Activated B cell treated with CpG ODN at 0.5 μM for 24 hours (primary cell): ENCODE measurements at regions of chr16 and their contacts with region 1.

Region 1: DNA sequence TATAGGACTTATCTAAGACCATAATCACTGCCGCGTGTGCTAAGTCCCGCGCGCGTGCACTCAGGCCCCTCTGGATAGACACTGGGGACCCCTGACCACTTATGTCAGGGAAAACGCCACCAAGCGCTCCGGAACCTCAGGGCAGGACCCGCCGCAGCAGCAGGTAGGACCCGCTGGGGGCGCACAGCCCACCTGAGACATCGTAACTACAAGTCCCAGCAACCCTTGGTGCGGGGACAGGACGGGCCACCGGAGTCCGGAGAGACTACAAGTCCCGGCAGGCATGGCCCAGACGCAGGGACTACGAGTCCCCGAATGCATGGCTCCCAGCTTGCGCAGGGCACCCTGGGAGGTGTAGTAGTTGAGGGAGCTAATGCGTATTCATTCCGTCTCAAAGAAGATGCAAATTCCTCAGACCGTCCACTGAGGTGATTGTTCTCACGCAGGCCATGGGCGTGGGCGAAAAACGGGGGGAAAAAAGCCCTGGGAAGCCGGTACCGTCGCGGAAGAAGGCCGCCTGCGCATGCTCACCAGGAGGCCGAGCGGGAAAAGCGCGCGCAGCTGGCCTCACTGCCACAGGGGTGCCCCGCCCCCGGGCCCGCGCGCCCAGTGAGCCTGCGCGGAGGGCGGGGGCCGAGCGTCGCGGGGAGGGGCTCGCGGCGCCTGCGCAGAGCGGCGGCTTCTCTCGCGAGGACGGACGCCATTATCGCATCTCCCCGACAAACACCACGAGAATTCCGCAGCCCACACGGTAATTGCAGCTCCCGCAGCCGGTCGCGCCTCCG is at the start of gene BANP:
- DNase-seq: peak; percentile 95
- ATAC-seq: peak; percentile 93
- H3K4me3 Mint-ChIP-seq: peak within 1 kb of the TSS; percentile 97
- H3K27ac Mint-ChIP-seq: peak within 1 kb of the TSS; percentile 100
- H3K4me1 Mint-ChIP-seq: peaks cover 69% of the 10 kb centered on the region
- H3K27me3 Mint-ChIP-seq: no peaks in the 10 kb centered on the region
- CTCF ChIP-seq: no peak
- total RNA-seq, gene BANP: 62.8 and 72.3 TPM in 2 replicates

Region 2: GRCh38 chr16:87492721-87493607 is 458.0 kb before region 1 on chr16 and contains the start of gene ZCCHC14:
- CTCF ChIA-PET with region 1: no interaction called
- POLR2A ChIA-PET with region 1: no interaction called
- intact Hi-C with region 1: loop called (anchors 10 kb)
- DNase-seq: peak; percentile 89
- ATAC-seq: peak; percentile 91
- H3K4me3 Mint-ChIP-seq: peak within 1 kb of the TSS; percentile 82
- H3K27ac Mint-ChIP-seq: peak within 1 kb of the TSS; percentile 59
- H3K4me1 Mint-ChIP-seq: peaks cover 46% of the 10 kb centered on the region
- H3K27me3 Mint-ChIP-seq: peaks cover 22% of the 10 kb centered on the region
- CTCF ChIP-seq: no peak
- total RNA-seq, gene ZCCHC14: 3.4 and 3.8 TPM in 2 replicates

Region 3: GRCh38 chr16:87877938-87878507 is 72.9 kb before region 1 on chr16:
- CTCF ChIA-PET with region 1: no interaction called
- POLR2A ChIA-PET with region 1: interaction called, 11 read pairs
- intact Hi-C with region 1: no loop called
- DNase-seq: no peak
- ATAC-seq: peak; percentile 32
- H3K4me3 Mint-ChIP-seq: no peak overlapping the region
- H3K27ac Mint-ChIP-seq: no peak overlapping the region
- H3K4me1 Mint-ChIP-seq: peaks cover 10% of the 10 kb centered on the region
- H3K27me3 Mint-ChIP-seq: peaks cover 8% of the 10 kb centered on the region
- CTCF ChIP-seq: no peak

Region 4: DNA sequence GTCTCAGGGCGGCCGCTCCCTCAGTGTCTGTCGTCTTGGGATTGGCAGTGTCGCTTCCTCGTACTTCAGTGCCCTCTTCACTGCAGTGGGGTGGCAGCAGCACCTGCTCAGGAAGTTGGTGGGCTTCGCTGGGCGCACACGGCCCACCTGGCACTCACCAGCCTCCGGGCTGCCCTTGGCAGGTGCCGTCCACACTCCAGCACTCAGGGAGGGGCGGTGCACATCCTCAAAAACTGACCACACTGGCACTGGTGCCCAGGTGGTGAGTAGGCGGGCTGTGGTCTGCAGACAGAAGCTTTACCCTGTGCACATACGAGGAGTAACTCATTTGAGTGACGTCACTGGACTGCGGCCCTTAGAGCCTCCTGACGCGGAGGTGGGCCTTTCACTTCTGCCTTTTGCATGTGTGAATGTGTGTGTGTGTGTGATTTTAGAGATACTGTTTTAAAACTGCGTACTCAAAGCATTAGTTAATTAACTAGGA is 94.9 kb after region 1 on chr16:
- CTCF ChIA-PET with region 1: no interaction called
- POLR2A ChIA-PET with region 1: interaction called, 11 read pairs
- intact Hi-C with region 1: loop called (anchors 1 kb)
- DNase-seq: peak; percentile 83
- ATAC-seq: peak; percentile 72
- H3K4me3 Mint-ChIP-seq: peak overlapping the region; percentile 77
- H3K27ac Mint-ChIP-seq: peak overlapping the region; percentile 98
- H3K4me1 Mint-ChIP-seq: peaks cover 83% of the 10 kb centered on the region
- H3K27me3 Mint-ChIP-seq: no peaks in the 10 kb centered on the region
- CTCF ChIP-seq: no peak

Region 5: DNA sequence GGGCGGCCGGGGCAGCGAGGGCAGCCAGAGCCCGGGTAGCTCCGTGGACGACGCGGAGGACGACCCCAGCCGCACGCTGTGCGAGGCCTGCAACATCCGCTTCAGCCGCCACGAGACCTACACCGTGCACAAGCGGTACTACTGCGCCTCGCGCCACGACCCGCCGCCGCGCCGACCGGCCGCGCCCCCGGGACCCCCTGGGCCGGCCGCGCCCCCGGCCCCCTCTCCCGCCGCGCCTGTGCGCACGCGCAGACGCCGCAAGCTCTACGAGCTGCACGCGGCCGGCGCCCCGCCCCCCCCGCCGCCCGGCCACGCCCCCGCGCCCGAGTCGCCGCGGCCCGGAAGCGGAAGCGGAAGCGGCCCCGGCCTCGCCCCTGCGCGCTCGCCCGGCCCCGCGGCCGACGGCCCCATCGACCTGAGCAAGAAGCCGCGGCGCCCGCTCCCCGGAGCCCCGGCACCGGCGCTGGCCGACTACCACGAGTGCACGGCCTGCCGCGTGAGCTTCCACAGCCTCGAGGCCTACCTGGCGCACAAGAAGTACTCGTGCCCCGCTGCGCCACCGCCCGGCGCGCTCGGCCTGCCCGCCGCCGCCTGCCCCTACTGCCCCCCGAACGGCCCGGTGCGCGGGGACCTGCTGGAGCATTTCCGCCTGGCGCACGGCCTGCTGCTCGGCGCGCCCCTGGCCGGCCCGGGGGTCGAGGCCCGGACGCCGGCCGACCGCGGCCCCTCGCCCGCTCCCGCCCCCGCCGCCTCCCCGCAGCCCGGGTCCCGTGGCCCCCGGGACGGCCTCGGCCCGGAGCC is 583.2 kb after region 1 on chr16:
- CTCF ChIA-PET with region 1: no interaction called
- POLR2A ChIA-PET with region 1: no interaction called
- intact Hi-C with region 1: loop called (anchors 1 kb)
- DNase-seq: peak; percentile 85
- ATAC-seq: peak; percentile 80
- H3K4me3 Mint-ChIP-seq: no peak overlapping the region
- H3K27ac Mint-ChIP-seq: no peak overlapping the region
- H3K4me1 Mint-ChIP-seq: peaks cover 12% of the 10 kb centered on the region
- H3K27me3 Mint-ChIP-seq: no peaks in the 10 kb centered on the region
- CTCF ChIP-seq: no peak

Region 6: DNA sequence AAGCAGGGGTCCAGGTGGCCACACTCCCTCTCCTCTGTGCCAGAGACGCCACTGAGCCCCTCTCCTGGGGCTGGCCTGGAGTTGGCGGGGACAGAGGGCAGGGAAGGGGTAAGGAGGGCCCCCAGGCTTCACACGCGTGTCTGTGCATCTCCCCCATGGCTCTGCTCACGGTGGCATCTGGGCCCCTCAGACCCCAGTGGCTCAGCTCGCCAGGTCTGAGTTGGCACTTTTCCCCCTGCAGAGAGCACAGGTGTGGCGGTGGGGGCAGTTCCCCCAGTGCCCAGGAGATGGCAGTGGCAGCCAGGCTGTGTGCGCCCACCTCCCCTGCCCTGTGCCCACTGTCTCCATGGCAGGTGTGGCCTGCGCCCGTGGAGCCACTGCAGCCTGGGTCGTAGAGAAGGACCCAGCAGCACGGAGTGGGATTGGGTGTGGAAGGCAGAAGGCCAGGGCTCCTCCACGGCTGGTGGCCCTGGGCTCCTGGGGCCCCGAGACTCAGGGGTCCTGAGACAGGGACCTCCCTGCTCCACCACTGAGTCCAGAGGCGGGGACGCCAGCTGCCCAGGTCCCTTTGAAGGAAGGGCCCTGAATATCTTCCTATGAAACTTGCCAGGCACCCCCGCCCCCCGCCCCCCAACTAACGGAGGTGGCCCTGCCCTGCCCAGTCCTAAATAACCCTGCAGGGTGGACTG is 865.1 kb after region 1 on chr16:
- CTCF ChIA-PET with region 1: no interaction called
- POLR2A ChIA-PET with region 1: no interaction called
- intact Hi-C with region 1: no loop called
- DNase-seq: peak; percentile 66
- ATAC-seq: peak; percentile 43
- H3K4me3 Mint-ChIP-seq: no peak overlapping the region
- H3K27ac Mint-ChIP-seq: no peak overlapping the region
- H3K4me1 Mint-ChIP-seq: peaks cover 6% of the 10 kb centered on the region
- H3K27me3 Mint-ChIP-seq: no peaks in the 10 kb centered on the region
- CTCF ChIP-seq: no peak

Region 7: GRCh38 chr16:89241187-89242007 is 1290.4 kb after region 1 on chr16:
- CTCF ChIA-PET with region 1: no interaction called
- POLR2A ChIA-PET with region 1: interaction called, 3 read pairs
- intact Hi-C with region 1: loop called (anchors 10 kb)
- DNase-seq: peak; percentile 75
- ATAC-seq: peak; percentile 77
- H3K4me3 Mint-ChIP-seq: peak overlapping the region; percentile 99
- H3K27ac Mint-ChIP-seq: peak overlapping the region; percentile 99
- H3K4me1 Mint-ChIP-seq: peaks cover 29% of the 10 kb centered on the region
- H3K27me3 Mint-ChIP-seq: no peaks in the 10 kb centered on the region
- CTCF ChIP-seq: no peak